A549 (cell line): ENCODE measurements at regions of chr12 and their contacts with region 1.

Region 1: GRCh38 chr12:54379401-54380201 is 4.9 kb downstream of the ZNF385A start:
- DNase-seq: peak; percentile 92 to 96
- ATAC-seq: peak; percentile 74 to 91
- H3K4me3 ChIP-seq: peak overlapping the region; percentile 61
- H3K27ac ChIP-seq: peak overlapping the region; percentile 81 to 96
- H3K4me1 ChIP-seq: peaks cover 43% of the 10 kb centered on the region
- CTCF ChIP-seq: peak; percentile 100
- EP300 ChIP-seq: no peak
- POLR2A ChIP-seq: no peak
- RAD21 ChIP-seq: peak; percentile 94 to 96

Region 2: GRCh38 chr12:54066408-54066807 is 313.2 kb before region 1 on chr12:
- CTCF ChIA-PET with region 1: no interaction called
- POLR2A ChIA-PET with region 1: no interaction called
- DNase-seq: no peak
- ATAC-seq: no peak
- H3K4me3 ChIP-seq: no peak overlapping the region
- H3K27ac ChIP-seq: no peak overlapping the region
- H3K4me1 ChIP-seq: no peaks in the 10 kb centered on the region
- CTCF ChIP-seq: no peak
- EP300 ChIP-seq: no peak
- POLR2A ChIP-seq: no peak
- RAD21 ChIP-seq: no peak

Region 3: GRCh38 chr12:54159140-54159539 is 220.5 kb before region 1 on chr12:
- CTCF ChIA-PET with region 1: no interaction called
- POLR2A ChIA-PET with region 1: no interaction called
- DNase-seq: no peak
- ATAC-seq: peak in 1 of 2 experiments; percentile 75; a peak in 3 of 6 replicates
- H3K4me3 ChIP-seq: no peak overlapping the region
- H3K27ac ChIP-seq: no peak overlapping the region
- H3K4me1 ChIP-seq: no peaks in the 10 kb centered on the region
- CTCF ChIP-seq: no peak
- EP300 ChIP-seq: no peak
- POLR2A ChIP-seq: no peak
- RAD21 ChIP-seq: no peak

Region 4: GRCh38 chr12:54220092-54220557 is 159.5 kb before region 1 on chr12:
- CTCF ChIA-PET with region 1: interaction called, 31 read pairs
- POLR2A ChIA-PET with region 1: no interaction called
- DNase-seq: peak; percentile 61 to 81
- ATAC-seq: peak; percentile 67 to 74
- H3K4me3 ChIP-seq: peak overlapping the region; percentile 27; the same call in 1 of the 3 replicates
- H3K27ac ChIP-seq: peak overlapping the region; percentile 37 to 66; a peak in 5 of 6 replicates
- H3K4me1 ChIP-seq: peaks cover 24% of the 10 kb centered on the region
- CTCF ChIP-seq: peak; percentile 81
- EP300 ChIP-seq: no peak
- POLR2A ChIP-seq: no peak
- RAD21 ChIP-seq: peak; percentile 79 to 82

Region 5: DNA sequence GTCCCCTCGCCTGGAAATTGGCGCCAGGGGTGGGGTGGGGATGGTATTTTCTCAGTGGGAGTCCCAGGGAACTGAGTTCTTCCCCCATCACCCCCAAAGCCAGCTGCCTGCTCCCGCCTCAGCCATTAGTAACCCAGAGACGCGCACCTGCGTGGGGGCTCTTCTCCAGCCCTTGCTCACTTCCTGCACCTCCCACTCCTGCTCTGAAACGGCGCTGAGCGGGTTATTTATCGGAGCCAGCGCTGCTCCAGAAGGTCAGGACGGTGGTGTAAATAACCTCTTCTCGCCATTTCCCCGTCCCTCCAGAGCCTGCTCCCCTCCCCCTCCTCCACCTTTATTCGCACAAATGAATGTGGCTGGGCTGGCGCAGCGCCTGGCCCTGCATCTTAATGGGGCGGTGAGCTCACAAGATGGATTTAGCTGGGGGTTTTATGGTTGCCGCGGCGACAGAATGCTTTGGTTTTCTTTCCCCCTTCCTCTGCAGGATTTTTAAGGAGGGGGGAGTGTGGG is 27.5 kb before region 1 on chr12:
- CTCF ChIA-PET with region 1: interaction called, 26 read pairs
- POLR2A ChIA-PET with region 1: no interaction called
- DNase-seq: no peak
- ATAC-seq: no peak
- H3K4me3 ChIP-seq: no peak overlapping the region
- H3K27ac ChIP-seq: no peak overlapping the region
- H3K4me1 ChIP-seq: peaks cover 12% of the 10 kb centered on the region; the same call in 1 of the 3 replicates
- CTCF ChIP-seq: no peak
- EP300 ChIP-seq: no peak
- POLR2A ChIP-seq: no peak
- RAD21 ChIP-seq: no peak

Region 6: DNA sequence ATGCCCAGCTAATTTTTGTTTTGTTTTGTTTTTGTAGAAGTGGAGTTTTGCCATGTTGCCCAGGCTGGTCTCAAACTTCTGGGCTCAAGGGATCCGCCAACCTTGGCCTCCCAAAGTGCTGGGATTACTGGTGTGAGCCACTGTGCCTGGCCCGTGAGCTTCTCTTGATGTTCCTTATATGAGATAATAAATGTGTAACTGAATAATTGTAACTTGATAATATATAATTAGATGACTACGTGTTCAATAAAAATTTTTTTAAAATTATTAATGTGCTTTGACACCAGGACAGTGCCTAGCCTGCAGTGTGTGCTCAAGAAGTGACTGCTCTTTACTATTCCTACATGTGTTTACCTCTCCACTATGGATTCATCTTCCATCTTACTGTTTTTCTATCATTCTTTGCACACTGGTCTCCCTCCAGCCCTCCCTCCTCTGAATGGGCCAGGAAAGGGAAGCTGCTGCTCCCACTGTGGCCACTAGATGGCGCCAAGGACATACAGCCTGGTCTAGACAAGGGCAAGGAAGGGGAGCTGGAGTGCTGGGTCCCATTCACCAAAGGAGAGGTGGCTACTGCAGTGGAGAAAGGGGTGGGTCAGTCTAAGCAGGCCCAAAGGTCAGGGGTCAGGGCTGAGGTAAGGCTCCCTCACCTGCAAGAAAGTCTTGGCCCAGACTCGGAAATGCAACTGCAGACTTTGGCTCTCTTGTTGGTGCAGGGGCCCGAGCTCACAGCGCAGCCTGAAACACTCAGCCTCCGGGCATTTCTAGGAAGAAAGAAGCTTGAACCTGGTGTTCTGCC is 19.6 kb after region 1 on chr12:
- CTCF ChIA-PET with region 1: interaction called, 224 read pairs
- POLR2A ChIA-PET with region 1: no interaction called
- DNase-seq: peak; percentile 85 to 96
- ATAC-seq: peak; percentile 82 to 94
- H3K4me3 ChIP-seq: no peak overlapping the region
- H3K27ac ChIP-seq: no peak overlapping the region
- H3K4me1 ChIP-seq: no peaks in the 10 kb centered on the region
- CTCF ChIP-seq: peak; percentile 96
- EP300 ChIP-seq: no peak
- POLR2A ChIP-seq: no peak
- RAD21 ChIP-seq: peak; percentile 95 to 99

Region 7: DNA sequence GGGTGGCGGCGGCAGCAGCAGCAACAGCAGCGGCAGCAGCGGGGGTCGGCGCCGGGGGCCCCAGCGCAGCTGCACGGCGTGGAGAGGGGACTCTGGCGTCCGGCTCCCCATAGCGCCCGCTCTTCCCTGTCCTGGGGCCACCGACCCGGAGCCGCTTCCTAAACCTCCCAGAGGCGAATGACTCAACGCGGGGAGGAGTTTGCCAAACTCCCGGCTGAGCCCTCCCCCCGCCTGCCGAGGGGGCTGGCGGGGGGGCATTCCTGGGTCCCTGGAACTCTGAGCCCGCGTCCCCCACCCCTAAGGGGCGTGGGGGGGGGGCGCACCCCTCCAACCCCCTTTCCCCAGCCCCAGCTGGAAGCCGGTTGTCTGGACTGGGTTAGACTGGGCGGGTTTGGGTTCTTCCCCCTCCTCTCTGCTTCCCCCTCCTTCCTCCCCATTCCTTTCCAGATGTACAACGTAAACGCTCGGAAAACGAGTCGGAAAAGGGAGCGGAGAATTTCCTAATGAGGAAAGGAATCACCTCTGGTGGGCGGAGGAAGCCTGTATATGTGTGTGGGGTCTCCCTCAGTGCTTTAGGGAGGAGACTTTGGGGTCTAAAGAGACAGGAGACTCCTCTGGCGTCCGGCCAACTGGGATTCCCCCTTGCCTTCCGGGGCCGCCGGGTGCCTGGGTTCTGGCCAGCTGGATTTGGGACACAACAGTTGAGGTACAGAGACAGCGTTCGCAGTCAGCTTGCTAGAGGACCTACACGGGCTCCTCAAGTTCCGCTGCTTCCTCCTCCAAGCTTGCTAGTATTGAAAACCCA is 39.7 kb after region 1 on chr12 and contains the start of gene ITGA5:
- CTCF ChIA-PET with region 1: interaction called, 11 read pairs
- POLR2A ChIA-PET with region 1: no interaction called
- DNase-seq: peak; percentile 53 to 90
- ATAC-seq: peak; percentile 70 to 82
- H3K4me3 ChIP-seq: peak within 1 kb of the TSS; percentile 77
- H3K27ac ChIP-seq: peak within 1 kb of the TSS; percentile 94 to 99
- H3K4me1 ChIP-seq: peaks cover 71% of the 10 kb centered on the region
- CTCF ChIP-seq: no peak
- EP300 ChIP-seq: no peak
- POLR2A ChIP-seq: peak; percentile 68
- RAD21 ChIP-seq: no peak
- polyA plus RNA-seq, gene ITGA5: 31.7 and 36.1 TPM in 2 replicates

Region 8: GRCh38 chr12:54579696-54580333 is 200.2 kb after region 1 on chr12:
- CTCF ChIA-PET with region 1: no interaction called
- POLR2A ChIA-PET with region 1: no interaction called
- DNase-seq: peak; percentile 76 to 85
- ATAC-seq: peak; percentile 88 to 98
- H3K4me3 ChIP-seq: no peak overlapping the region
- H3K27ac ChIP-seq: peak overlapping the region in 1 of 2 experiments; percentile 55; a peak in 1 of 6 replicates
- H3K4me1 ChIP-seq: no peaks in the 10 kb centered on the region
- CTCF ChIP-seq: peak; percentile 84
- EP300 ChIP-seq: no peak
- POLR2A ChIP-seq: no peak; the same call in 1 of the 2 replicates
- RAD21 ChIP-seq: peak; percentile 69 to 76